Aorta (tissue), 5 donors: ENCODE measurements at regions of chr6 and their contacts with region 1.

Region 1: DNA sequence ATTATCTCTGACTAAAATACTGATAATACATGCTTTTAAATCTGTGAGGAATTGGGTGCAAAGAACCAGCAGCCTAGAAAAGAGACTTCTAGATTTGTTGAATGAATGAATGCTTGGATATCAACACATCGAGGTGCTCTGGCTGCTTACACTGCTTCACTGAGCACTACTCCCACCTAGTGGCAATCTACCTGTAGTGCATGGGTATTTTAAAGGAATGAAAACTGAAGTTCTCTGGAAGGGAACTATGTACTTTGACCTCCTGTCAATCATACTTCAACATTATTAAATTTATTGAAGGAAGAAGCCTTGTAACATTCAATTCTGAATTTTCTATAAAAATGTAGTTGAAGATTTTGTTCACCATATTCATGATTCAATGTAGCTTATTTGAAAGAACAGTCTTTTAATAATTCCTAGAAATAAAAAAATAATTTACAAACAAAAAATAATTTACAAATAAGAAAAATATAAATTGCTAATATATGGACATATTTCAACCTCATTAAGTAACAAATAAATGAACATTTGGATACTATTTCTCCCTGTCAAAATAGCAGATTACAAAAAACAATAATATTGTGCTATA is 111.2 kb upstream of the MMS22L start:
- DNase-seq: no peak
- ATAC-seq: peak; percentile 76
- H3K4me3 ChIP-seq: no peak overlapping the region
- H3K27ac ChIP-seq: no peak overlapping the region
- H3K4me1 ChIP-seq: no peaks in the 10 kb centered on the region
- H3K27me3 ChIP-seq: no peaks in the 10 kb centered on the region

Region 2: DNA sequence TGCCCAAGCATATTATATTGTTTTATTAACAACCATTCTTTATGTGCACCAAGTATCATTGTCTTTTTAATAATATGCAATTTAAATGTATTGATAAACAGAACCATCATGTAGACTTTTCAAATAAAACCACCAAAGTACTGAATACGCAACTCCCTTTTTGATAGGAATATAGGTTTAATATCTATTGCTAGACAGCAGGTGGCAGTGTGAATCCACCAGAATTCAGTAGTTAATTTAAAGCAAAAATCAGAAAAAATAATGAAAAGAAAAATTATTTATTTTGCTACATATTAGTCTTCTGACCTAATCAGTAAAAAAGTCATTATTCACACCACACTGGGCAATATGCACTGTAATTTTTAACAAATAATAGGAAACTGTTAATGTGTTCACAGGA is 326.0 kb before region 1 on chr6:
- intact Hi-C with region 1: loop called (anchors 10 kb)
- DNase-seq: no peak
- ATAC-seq: no peak
- H3K4me3 ChIP-seq: no peak overlapping the region
- H3K27ac ChIP-seq: no peak overlapping the region
- H3K4me1 ChIP-seq: no peaks in the 10 kb centered on the region
- H3K27me3 ChIP-seq: no peaks in the 10 kb centered on the region

Region 3: GRCh38 chr6:97186416-97186999 is 207.7 kb before region 1 on chr6:
- intact Hi-C with region 1: loop called (anchors 2 to 5 kb)
- DNase-seq: peak; percentile 67 to 77
- ATAC-seq: no peak
- H3K4me3 ChIP-seq: no peak overlapping the region
- H3K27ac ChIP-seq: no peak overlapping the region
- H3K4me1 ChIP-seq: no peaks in the 10 kb centered on the region
- H3K27me3 ChIP-seq: no peaks in the 10 kb centered on the region